ENCODE measurements at regions of chr16 and their contacts with region 1.

Region 1: GRCh38 chr16:30650369-30651123 is at the start of gene PRR14:
- DNase-seq: peak; percentile 99
- H3K4me3 Mint-ChIP-seq: peak within 1 kb of the TSS; percentile 98
- H3K27ac Mint-ChIP-seq: peak within 1 kb of the TSS; percentile 97
- H3K4me1 Mint-ChIP-seq: peaks cover 13% of the 10 kb centered on the region
- H3K27me3 Mint-ChIP-seq: no peaks in the 10 kb centered on the region
- total RNA-seq, gene PRR14: 84.0 and 90.5 TPM in 2 replicates

Region 2: GRCh38 chr16:30628627-30629540 is 21.7 kb before region 1 on chr16:
- intact Hi-C with region 1: loop called (anchors 1 kb)
- DNase-seq: peak; percentile 77
- H3K4me3 Mint-ChIP-seq: peak overlapping the region; percentile 46
- H3K27ac Mint-ChIP-seq: peak overlapping the region; percentile 60
- H3K4me1 Mint-ChIP-seq: peaks cover 4% of the 10 kb centered on the region
- H3K27me3 Mint-ChIP-seq: peaks cover under 1% of the 10 kb centered on the region